ENCODE measurements at regions of chr12 and their contacts with region 1.

Region 1: GRCh38 chr12:12696562-12697383 is 790 bp upstream of the GPR19 start:
- DNase-seq: peak; percentile 91
- ATAC-seq: peak; percentile 78
- H3K4me3 ChIP-seq: peak overlapping the region; percentile 77
- H3K27ac ChIP-seq: peak overlapping the region; percentile 99
- H3K4me1 ChIP-seq: peaks cover 35% of the 10 kb centered on the region
- H3K27me3 ChIP-seq: no peaks in the 10 kb centered on the region
- CTCF ChIP-seq: no peak
- EP300 ChIP-seq: peak; percentile 39 to 63; a peak in 2 of 4 replicates
- POLR2A ChIP-seq: peak; percentile 72
- RAD21 ChIP-seq: no peak

Region 2: DNA sequence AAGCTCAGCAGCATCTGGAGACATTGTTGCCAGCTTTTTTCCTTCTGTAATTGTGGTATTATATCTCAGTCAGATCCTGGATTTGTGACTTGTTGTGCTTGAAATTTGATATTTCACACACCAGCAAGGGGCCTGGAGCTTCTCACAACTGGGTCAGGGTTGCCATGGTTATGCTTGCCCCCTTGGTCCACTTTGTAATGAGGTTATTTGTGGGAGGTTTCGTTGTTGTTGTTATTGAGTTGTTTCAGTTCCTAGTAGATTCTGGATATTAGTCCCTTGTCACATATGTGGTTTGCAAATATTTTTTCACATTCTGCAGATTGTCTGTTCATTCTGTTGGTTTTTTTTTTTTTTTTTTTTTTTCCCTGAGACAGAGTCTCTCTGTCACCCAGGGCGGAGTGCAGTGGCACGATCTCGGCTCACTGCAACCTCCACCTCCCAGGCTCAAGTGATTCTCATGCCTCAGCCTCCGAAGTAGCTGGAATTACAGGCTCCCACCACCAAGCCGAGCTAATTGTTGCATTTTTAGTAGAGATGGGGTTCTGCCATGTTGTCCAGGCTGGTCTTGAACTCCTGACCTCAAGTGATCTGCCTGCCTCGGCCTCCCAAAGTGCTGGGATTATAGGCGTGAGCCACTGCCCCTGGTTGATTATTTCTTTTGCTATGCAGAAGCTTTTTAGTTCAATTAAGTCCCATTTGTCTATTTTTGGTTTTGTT is 1127.9 kb before region 1 on chr12:
- CTCF ChIA-PET with region 1: no interaction called
- POLR2A ChIA-PET with region 1: no interaction called
- RAD21 ChIA-PET with region 1: no interaction called
- SMC1A ChIA-PET with region 1: no interaction called
- in situ Hi-C with region 1: loop called (anchors 10 kb)
- intact Hi-C with region 1: no loop called
- DNase-seq: peak; percentile 96
- ATAC-seq: peak; percentile 77
- H3K4me3 ChIP-seq: peak overlapping the region; percentile 48
- H3K27ac ChIP-seq: peak overlapping the region; percentile 98
- H3K4me1 ChIP-seq: peaks cover 46% of the 10 kb centered on the region
- H3K27me3 ChIP-seq: no peaks in the 10 kb centered on the region
- CTCF ChIP-seq: no peak
- EP300 ChIP-seq: peak; percentile 99
- POLR2A ChIP-seq: no peak
- RAD21 ChIP-seq: no peak

Region 3: DNA sequence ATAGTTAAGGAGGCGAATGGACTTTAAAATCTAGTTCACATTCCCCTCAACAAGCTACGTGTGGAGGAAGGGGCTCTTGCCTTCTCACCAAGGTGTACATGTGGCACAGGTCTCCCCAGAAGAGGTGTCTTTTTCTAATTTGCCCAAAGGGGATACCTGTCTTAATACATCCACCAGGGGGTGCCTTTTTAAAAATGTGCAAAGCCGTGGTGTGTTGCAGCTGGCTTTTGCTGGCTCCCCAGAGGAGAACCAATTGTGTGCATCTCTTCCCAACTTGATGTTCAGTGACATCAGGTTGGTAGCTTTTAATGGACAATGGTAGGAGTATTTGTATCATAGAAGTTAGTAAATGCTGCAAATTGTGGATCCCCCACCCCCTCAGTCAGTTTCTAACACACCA is 51.3 kb before region 1 on chr12:
- CTCF ChIA-PET with region 1: interaction called, 7 read pairs
- POLR2A ChIA-PET with region 1: interaction called, 3 read pairs
- RAD21 ChIA-PET with region 1: interaction called, 13 read pairs
- SMC1A ChIA-PET with region 1: interaction called, 8 read pairs
- in situ Hi-C with region 1: no loop called
- intact Hi-C with region 1: no loop called
- DNase-seq: no peak
- ATAC-seq: peak; percentile 90
- H3K4me3 ChIP-seq: peak overlapping the region; percentile 14; the same call in 1 of the 2 replicates
- H3K27ac ChIP-seq: peak overlapping the region; percentile 76
- H3K4me1 ChIP-seq: peaks cover 20% of the 10 kb centered on the region
- H3K27me3 ChIP-seq: no peaks in the 10 kb centered on the region
- CTCF ChIP-seq: peak; percentile 38 to 70 (median 50)
- EP300 ChIP-seq: no peak
- POLR2A ChIP-seq: no peak
- RAD21 ChIP-seq: peak; percentile 59

Region 4: DNA sequence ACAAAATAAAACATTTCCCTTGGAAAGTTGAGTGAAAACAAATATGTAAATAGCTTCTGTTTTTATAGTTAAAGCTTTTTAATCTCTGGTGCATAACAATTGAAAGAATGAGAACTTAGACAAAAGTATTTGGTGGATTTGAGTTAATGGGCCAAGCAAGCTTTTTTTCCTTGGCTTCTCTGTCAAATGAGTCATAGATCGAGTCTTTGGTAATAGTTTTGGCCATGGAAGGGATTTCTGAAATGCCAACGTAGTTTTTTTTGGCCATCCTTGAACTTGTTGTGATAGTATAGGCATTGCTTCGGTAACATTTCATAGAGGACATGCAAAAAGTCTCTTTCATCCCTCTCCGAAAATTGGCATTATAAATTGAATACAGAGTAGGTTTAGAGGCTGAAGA is 35.7 kb before region 1 on chr12:
- CTCF ChIA-PET with region 1: interaction called, 19 read pairs
- POLR2A ChIA-PET with region 1: interaction called, 11 read pairs
- RAD21 ChIA-PET with region 1: interaction called, 12 read pairs
- SMC1A ChIA-PET with region 1: interaction called, 42 read pairs
- in situ Hi-C with region 1: no loop called
- intact Hi-C with region 1: no loop called
- DNase-seq: no peak
- ATAC-seq: no peak
- H3K4me3 ChIP-seq: no peak overlapping the region
- H3K27ac ChIP-seq: no peak overlapping the region
- H3K4me1 ChIP-seq: peaks cover 4% of the 10 kb centered on the region; the same call in 1 of the 2 replicates
- H3K27me3 ChIP-seq: no peaks in the 10 kb centered on the region
- CTCF ChIP-seq: no peak
- EP300 ChIP-seq: no peak
- POLR2A ChIP-seq: no peak
- RAD21 ChIP-seq: no peak

Region 5: DNA sequence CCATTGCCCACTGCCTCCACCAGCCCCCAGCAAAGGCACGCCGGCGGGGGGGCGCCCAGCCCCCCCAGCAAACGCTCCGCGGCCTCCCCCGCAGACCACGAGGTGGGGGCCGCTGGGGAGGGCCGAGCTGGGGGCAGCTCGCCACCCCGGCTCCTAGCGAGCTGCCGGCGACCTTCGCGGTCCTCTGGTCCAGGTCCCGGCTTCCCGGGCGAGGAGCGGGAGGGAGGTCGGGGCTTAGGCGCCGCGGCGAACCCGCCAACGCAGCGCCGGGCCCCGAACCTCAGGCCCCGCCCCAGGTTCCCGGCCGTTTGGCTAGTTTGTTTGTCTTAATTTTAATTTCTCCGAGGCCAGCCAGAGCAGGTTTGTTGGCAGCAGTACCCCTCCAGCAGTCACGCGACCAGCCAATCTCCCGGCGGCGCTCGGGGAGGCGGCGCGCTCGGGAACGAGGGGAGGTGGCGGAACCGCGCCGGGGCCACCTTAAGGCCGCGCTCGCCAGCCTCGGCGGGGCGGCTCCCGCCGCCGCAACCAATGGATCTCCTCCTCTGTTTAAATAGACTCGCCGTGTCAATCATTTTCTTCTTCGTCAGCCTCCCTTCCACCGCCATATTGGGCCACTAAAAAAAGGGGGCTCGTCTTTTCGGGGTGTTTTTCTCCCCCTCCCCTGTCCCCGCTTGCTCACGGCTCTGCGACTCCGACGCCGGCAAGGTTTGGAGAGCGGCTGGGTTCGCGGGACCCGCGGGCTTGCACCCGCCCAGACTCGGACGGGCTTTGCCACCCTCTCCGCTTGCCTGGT is 20.2 kb after region 1 on chr12 and contains the start of gene CDKN1B:
- CTCF ChIA-PET with region 1: interaction called, 6 read pairs
- POLR2A ChIA-PET with region 1: interaction called, 21 read pairs
- RAD21 ChIA-PET with region 1: interaction called, 13 read pairs
- SMC1A ChIA-PET with region 1: interaction called, 51 read pairs
- in situ Hi-C with region 1: no loop called
- intact Hi-C with region 1: loop called (anchors 1 kb)
- DNase-seq: peak; percentile 58
- ATAC-seq: peak; percentile 74
- H3K4me3 ChIP-seq: peak within 1 kb of the TSS; percentile 97
- H3K27ac ChIP-seq: peak within 1 kb of the TSS; percentile 97
- H3K4me1 ChIP-seq: peaks cover 20% of the 10 kb centered on the region
- H3K27me3 ChIP-seq: no peaks in the 10 kb centered on the region
- CTCF ChIP-seq: no peak
- EP300 ChIP-seq: no peak
- POLR2A ChIP-seq: peak; percentile 75
- RAD21 ChIP-seq: no peak
- polyA plus RNA-seq, gene CDKN1B: 4.2 to 8.0 TPM

Region 6: DNA sequence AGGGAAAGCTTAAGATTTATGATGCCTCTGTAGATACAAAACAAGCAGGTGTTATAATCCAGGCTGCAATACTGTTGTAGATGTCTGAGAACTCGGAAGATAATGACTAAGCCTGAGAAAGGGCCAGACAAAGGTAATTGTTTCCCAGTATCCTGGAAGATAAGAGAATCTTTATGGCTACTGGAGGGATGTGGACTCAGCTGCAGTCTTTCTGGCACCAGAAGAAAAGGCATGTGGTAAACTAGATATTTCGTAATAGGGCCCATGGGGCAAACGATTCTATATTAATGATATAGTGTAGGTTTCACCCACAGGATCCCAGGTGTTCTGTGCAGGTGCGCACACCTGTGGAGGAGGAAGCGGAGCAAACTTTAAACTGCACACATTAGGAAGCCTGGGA is 79.5 kb after region 1 on chr12:
- CTCF ChIA-PET with region 1: no interaction called
- POLR2A ChIA-PET with region 1: no interaction called
- RAD21 ChIA-PET with region 1: no interaction called
- SMC1A ChIA-PET with region 1: no interaction called
- in situ Hi-C with region 1: no loop called
- intact Hi-C with region 1: no loop called
- DNase-seq: no peak
- ATAC-seq: no peak
- H3K4me3 ChIP-seq: no peak overlapping the region
- H3K27ac ChIP-seq: no peak overlapping the region
- H3K4me1 ChIP-seq: no peaks in the 10 kb centered on the region
- H3K27me3 ChIP-seq: no peaks in the 10 kb centered on the region
- CTCF ChIP-seq: no peak
- EP300 ChIP-seq: no peak
- POLR2A ChIP-seq: no peak
- RAD21 ChIP-seq: no peak

Measured in GM12878 (cell line).